ENCODE measurements at regions of chr14 and their contacts with region 1.

Region 1: GRCh38 chr14:50101417-50101816 is 15.0 kb downstream of the VCPKMT start:
- DNase-seq: no peak
- ATAC-seq: peak; percentile 62

Region 2: GRCh38 chr14:49879683-49880204 is 221.7 kb before region 1 on chr14:
- intact Hi-C with region 1: loop called in 1 of 2 experiments (anchors 5 kb)
- DNase-seq: peak; percentile 51 to 65
- ATAC-seq: peak; percentile 87

Region 3: DNA sequence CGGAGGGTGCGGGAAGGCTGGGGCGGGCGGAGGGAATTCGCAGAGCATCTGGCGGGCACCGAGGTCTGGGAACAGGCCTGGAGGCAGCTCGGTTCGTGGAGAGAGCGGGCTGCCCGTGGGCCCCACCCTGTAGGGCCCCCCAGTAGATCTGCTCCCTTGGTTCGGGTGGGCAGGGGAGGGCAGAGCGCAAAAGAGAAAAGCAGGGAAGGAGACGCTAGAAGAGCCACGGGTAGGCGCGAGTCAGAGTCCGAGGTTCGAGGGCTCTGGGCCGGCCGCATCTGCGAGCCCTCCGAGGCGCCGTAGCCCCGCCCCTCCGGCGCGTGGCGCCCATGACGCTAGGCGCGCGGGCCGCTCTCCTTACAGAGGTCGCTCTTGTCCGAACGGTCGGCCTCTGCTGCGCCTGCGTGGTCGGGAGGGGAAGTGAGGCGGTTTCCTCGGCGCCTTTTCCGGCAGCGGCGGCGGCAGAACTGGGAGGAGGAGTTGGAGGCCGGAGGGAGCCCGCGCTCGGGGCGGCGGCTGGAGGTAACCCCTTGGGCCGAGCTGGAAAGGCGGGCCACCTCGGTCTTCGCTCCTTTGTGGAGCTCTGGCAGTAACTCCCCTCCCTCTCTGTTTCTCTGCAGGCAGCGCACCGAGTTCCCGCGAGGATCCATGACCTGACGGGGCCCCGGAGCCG is 208.6 kb before region 1 on chr14 and contains the start of gene ARF6:
- intact Hi-C with region 1: no loop called
- DNase-seq: peak; percentile 99
- ATAC-seq: peak; percentile 86
- total RNA-seq, gene ARF6: 131 to 161 TPM

Region 4: DNA sequence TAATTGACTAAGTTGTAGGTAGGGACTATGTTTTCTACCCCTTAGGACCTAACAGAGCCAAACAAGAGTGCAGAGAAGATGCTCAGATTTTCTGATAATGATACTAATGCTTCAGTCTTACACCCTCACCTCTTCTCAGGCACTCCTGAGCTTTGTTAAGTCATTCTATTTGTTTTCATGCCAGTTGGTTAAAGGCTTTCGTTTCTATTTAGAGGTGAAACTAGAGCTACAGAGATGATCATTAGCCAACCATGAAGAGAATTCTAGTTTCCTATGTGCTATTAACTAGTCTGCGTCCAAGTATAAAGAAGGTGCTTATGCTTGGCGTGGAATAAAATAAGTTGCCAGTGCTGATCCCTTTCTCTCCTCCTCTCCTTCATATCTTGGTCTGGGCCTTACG is 877.5 kb after region 1 on chr14:
- intact Hi-C with region 1: no loop called
- DNase-seq: no peak
- ATAC-seq: no peak